A549 (cell line): ENCODE measurements at regions of chr15 and their contacts with region 1.

Region 1: DNA sequence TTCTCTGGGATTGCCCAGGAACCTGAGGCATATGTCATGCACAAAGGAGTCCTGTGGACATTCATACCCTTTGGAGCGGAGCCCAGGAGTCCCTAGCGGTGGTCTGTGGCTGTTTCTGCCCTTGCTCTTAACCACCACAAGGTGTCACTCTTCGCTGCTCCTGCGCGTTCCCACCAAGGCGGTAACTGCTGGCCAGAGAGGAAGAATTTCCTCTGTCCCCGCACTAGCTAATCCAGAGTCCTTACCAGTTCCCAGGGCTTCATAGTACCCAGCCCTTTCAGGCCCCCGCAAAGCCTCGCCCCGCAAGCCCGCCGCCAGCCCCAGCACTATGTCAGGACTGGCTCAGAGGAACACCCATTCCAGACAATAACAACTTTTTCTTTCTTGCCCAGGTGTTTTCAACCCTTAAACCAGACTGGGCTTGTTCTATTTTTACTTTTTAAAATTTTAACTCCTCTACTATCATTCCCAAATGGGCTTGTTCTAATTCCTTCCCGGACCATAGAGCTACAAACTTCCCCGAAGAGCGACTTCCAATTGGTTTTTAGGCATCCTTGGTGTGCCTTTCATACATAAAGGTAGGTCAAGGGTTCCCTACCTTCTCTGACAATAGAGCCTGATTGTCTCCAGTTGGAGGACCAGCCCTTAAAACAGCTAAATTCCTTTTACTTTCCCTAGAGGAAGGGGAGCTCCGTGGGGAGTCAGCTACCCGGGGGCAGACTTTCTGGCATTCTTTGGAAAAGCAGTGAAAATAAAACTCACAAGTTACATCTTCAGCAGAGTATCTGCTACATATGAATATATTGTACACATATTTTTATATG is 31.8 kb upstream of the ZNF774 start:
- DNase-seq: peak; percentile 92 to 95
- ATAC-seq: peak; percentile 98 to 99
- H3K4me3 ChIP-seq: no peak overlapping the region
- H3K27ac ChIP-seq: peak overlapping the region; percentile 60 to 76
- H3K4me1 ChIP-seq: peaks cover 13% of the 10 kb centered on the region
- CTCF ChIP-seq: peak; percentile 99
- EP300 ChIP-seq: no peak
- POLR2A ChIP-seq: no peak
- RAD21 ChIP-seq: peak; percentile 99 to 100

Region 2: DNA sequence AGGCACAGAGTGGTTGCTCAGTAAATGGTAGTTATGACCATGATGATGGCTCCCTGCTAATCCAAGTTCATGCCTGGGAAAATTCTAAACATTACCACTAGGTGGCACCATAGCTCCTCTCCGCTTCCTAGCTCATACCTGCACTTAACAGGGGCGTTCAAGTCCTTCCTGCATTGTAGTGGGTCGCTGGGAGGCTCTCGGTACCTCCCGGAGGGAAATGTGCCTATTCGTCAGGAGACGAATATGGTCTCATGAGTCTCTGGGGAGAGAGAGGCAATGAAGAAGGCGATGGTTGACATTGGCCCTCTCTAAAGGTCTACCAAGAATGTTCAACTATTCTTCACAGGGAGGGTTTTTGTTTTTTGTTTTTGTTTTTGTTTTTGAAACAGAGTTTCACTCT is 580.1 kb before region 1 on chr15:
- CTCF ChIA-PET with region 1: no interaction called
- POLR2A ChIA-PET with region 1: no interaction called
- DNase-seq: peak; percentile 83 to 85
- ATAC-seq: peak; percentile 87 to 95
- H3K4me3 ChIP-seq: no peak overlapping the region
- H3K27ac ChIP-seq: peak overlapping the region in 1 of 2 experiments; percentile 36; a peak in 1 of 6 replicates
- H3K4me1 ChIP-seq: no peaks in the 10 kb centered on the region
- CTCF ChIP-seq: peak; percentile 96
- EP300 ChIP-seq: no peak
- POLR2A ChIP-seq: no peak
- RAD21 ChIP-seq: peak; percentile 89 to 95

Region 3: DNA sequence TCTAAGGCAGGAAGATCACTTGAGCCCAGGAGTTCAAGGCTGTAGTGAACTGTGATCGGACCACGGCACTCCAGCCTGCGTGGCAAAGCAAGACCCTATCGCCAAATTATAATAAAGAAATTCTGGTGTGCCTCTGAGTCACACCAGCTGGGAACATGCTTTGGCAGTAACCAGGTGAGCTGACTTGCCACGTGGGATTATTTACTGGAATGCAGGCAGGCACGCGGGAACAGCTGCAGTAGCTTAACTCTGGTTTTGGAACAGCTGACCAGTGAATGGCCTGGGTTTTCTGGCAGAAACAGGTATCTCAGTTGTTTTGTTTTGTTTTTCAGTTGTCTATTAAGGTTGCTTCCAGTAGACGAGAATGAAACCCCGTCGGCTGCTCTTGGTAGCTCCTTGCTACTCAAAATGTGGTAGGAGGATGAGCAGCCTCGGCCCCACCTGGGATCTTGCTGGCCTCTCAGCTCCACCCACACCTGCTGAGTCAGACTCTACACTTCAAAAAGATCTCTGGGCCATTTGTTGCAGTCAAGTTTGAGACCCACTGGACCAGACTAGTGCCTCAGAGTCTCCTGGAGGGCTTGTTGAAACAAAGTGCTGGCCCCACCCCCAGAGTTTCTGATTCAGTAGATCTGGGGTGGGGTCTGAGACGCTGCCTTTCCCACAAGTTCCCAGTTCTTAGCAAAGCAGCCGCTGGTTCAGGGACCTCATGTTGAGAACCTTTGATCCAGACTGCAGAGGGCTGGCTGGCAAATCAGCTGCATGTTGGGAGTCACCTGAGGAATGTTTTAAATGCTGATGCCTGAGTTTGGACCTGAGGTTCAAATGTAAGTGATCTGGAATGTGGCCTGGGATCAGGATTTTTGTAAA is 244.6 kb before region 1 on chr15:
- CTCF ChIA-PET with region 1: no interaction called
- POLR2A ChIA-PET with region 1: no interaction called
- DNase-seq: no peak
- ATAC-seq: no peak
- H3K4me3 ChIP-seq: no peak overlapping the region
- H3K27ac ChIP-seq: no peak overlapping the region
- H3K4me1 ChIP-seq: no peaks in the 10 kb centered on the region
- CTCF ChIP-seq: no peak
- EP300 ChIP-seq: no peak
- POLR2A ChIP-seq: no peak
- RAD21 ChIP-seq: no peak

Region 4: GRCh38 chr15:90191794-90192509 is 128.3 kb before region 1 on chr15:
- CTCF ChIA-PET with region 1: no interaction called
- POLR2A ChIA-PET with region 1: no interaction called
- DNase-seq: peak in 1 of 2 experiments; percentile 92
- ATAC-seq: peak; percentile 84 to 85
- H3K4me3 ChIP-seq: no peak overlapping the region
- H3K27ac ChIP-seq: peak overlapping the region; percentile 74 to 89
- H3K4me1 ChIP-seq: peaks cover 55% of the 10 kb centered on the region
- CTCF ChIP-seq: no peak
- EP300 ChIP-seq: no peak
- POLR2A ChIP-seq: no peak
- RAD21 ChIP-seq: peak in 1 of 2 experiments; percentile 16; a peak in 1 of 5 replicates

Region 5: GRCh38 chr15:90336705-90337141 is 16.4 kb after region 1 on chr15:
- CTCF ChIA-PET with region 1: interaction called, 119 read pairs
- POLR2A ChIA-PET with region 1: no interaction called
- DNase-seq: peak in 1 of 2 experiments; percentile 69
- ATAC-seq: peak; percentile 60 to 86
- H3K4me3 ChIP-seq: no peak overlapping the region
- H3K27ac ChIP-seq: peak overlapping the region; percentile 39 to 63; a peak in 4 of 6 replicates
- H3K4me1 ChIP-seq: peaks cover 17% of the 10 kb centered on the region
- CTCF ChIP-seq: no peak
- EP300 ChIP-seq: no peak
- POLR2A ChIP-seq: no peak
- RAD21 ChIP-seq: no peak

Region 6: GRCh38 chr15:90382305-90382704 is 62.0 kb after region 1 on chr15:
- CTCF ChIA-PET with region 1: interaction called, 18 read pairs
- POLR2A ChIA-PET with region 1: no interaction called
- DNase-seq: no peak
- ATAC-seq: no peak
- H3K4me3 ChIP-seq: no peak overlapping the region
- H3K27ac ChIP-seq: no peak overlapping the region
- H3K4me1 ChIP-seq: no peaks in the 10 kb centered on the region
- CTCF ChIP-seq: no peak
- EP300 ChIP-seq: no peak
- POLR2A ChIP-seq: no peak
- RAD21 ChIP-seq: no peak

Region 7: DNA sequence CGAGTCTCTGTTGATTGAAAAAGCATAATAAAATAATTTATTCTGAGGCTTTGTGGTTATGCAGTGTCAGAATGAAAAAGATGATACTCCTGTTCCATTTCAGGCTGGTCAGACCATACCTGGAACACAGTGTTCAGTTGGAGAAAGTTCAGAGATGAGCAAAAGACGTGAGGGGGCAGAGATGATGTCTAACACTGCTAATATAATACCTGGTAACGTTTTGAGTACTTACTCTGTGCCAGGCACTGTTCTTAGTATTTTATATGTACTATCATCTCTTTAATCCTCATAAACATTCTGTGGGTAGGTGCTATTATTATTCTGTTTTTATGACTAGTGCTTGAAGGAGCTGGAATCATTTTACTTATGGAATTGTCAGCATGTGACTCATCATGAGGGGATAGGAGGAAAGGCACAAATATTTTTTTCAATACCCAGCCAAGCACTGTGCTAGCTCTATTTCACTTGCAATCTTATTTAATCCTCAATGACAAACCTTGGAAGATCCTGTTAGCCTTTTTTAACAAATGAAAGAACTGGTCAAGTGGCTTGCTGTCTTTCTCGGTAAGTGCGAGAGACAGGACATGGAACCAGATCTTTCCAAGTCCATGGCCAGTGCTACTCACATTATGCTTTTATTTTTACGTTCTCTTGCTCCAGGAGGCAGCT is 99.6 kb after region 1 on chr15:
- CTCF ChIA-PET with region 1: interaction called, 23 read pairs
- POLR2A ChIA-PET with region 1: no interaction called
- DNase-seq: peak; percentile 41 to 58
- ATAC-seq: peak; percentile 83 to 85
- H3K4me3 ChIP-seq: no peak overlapping the region; the same call in 2 of the 3 replicates
- H3K27ac ChIP-seq: peak overlapping the region; percentile 70 to 76; a peak in 5 of 6 replicates
- H3K4me1 ChIP-seq: peaks cover 54% of the 10 kb centered on the region
- CTCF ChIP-seq: no peak
- EP300 ChIP-seq: no peak
- POLR2A ChIP-seq: no peak
- RAD21 ChIP-seq: no peak

Region 8: GRCh38 chr15:90463381-90463780 is 143.1 kb after region 1 on chr15:
- CTCF ChIA-PET with region 1: interaction called, 70 read pairs
- POLR2A ChIA-PET with region 1: no interaction called
- DNase-seq: peak in 1 of 2 experiments; percentile 14
- ATAC-seq: peak; percentile 17 to 30; a peak in 2 of 6 replicates
- H3K4me3 ChIP-seq: no peak overlapping the region
- H3K27ac ChIP-seq: no peak overlapping the region
- H3K4me1 ChIP-seq: no peaks in the 10 kb centered on the region
- CTCF ChIP-seq: no peak
- EP300 ChIP-seq: no peak
- POLR2A ChIP-seq: no peak
- RAD21 ChIP-seq: no peak

Region 9: GRCh38 chr15:90535254-90535653 is 215.0 kb after region 1 on chr15:
- CTCF ChIA-PET with region 1: interaction called, 12 read pairs
- POLR2A ChIA-PET with region 1: no interaction called
- DNase-seq: no peak
- ATAC-seq: no peak
- H3K4me3 ChIP-seq: no peak overlapping the region
- H3K27ac ChIP-seq: no peak overlapping the region
- H3K4me1 ChIP-seq: peaks cover 9% of the 10 kb centered on the region; the same call in 1 of the 3 replicates
- CTCF ChIP-seq: no peak
- EP300 ChIP-seq: no peak
- POLR2A ChIP-seq: no peak
- RAD21 ChIP-seq: no peak

Region 10: DNA sequence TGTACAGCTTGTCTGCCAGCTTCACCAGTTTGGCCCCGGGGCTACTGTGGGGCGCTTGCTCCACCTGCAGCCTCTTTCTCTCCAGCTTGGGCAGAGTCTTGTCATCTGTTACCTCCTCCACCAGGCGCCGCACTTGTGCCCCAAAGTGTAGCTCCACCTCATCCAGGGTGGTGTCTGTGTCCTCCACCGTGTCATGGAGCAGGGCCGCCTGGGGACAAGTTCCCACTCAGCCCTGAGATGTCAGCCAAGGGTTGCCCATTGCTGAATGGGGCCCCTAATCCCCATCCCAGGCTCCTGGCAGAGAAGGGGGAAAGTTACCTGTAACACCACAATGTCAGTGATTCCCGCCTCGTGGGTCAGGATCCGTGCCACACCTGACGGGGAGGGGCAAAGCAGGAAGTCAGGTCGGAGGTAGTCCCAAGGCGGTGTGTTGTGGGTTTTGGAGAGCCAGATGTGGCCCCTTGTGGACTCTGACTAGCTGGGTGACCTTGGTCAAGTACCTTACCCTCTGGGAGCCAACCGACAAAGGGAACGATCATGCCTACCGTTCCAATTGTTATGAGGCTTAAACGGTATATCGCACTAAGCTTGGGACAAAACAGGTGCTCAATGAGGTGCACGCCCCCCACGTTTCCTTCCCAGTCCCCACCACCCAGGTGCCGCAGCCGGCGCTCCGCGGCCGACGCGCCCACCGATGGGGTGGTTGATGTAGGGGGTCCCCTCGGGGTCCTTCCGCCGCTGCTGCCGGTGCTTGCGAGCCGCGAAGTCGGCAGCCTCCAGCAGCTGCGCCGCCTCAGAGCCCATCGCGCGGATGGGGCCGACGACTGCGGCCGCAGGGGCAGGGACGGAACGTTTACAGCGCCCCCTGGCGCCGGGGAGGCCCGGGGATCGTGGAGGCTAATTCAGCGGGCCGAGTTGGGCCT is 611.7 kb after region 1 on chr15 and contains the start of gene HDDC3:
- CTCF ChIA-PET with region 1: interaction called, 17 read pairs
- POLR2A ChIA-PET with region 1: no interaction called
- DNase-seq: peak; percentile 94 to 98
- ATAC-seq: peak; percentile 67 to 77
- H3K4me3 ChIP-seq: peak within 1 kb of the TSS; percentile 69
- H3K27ac ChIP-seq: peak within 1 kb of the TSS; percentile 84 to 93
- H3K4me1 ChIP-seq: peaks cover 35% of the 10 kb centered on the region
- CTCF ChIP-seq: peak; percentile 95
- EP300 ChIP-seq: no peak
- POLR2A ChIP-seq: peak; percentile 73
- RAD21 ChIP-seq: peak; percentile 26 to 39
- polyA plus RNA-seq, gene HDDC3: 29.8 and 31.9 TPM in 2 replicates